ENCODE measurements at regions of chr6 and their contacts with region 1.

Region 1: DNA sequence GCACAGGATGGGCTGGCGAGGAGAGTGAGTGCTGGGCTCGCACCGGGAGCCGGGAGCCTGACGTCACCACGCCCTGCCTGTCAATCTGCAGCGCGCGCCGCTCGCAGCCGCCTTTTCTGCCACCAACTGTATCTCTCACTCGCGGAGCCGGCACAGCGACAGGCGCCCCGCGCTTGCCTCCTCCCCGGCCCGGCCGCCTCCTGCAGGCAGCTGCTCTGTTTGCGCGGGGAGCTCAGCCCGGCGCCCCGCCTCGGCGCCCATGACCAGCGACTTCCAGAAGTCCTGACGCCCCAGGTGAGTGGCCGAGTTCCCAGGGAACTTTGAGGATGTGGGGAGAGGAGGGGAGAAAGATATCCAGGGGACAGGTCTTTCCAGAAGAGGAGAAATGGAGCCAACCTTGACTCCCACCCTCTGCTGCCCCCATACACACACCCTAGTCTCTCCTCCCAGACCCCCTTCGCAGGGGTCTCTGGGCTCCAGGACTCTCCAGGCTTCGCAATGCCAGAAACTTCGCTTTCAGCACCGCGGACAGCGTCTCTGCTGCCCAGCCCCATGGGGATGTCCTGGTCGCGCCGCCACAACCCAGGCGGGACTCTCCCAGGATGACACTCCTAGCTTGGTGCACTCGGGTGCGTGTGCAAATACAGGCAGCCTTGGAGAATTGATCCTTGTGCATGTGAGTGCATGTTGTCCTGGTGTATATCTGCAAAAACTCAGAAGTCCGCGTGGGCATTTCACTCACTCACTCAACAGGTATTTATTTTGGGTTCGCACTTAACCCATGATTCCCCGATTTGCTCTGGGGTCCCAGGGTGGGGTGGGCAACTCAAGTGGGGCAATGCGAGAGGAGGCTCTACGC is at the start of gene GPR6:
- DNase-seq: peak; percentile 45
- H3K27ac ChIP-seq: no peak within 1 kb of the TSS
- CTCF ChIP-seq: no peak

Region 2: GRCh38 chr6:110053395-110054240 is 75.2 kb after region 1 on chr6:
- CTCF ChIA-PET with region 1: interaction called, 11 read pairs
- POLR2A ChIA-PET with region 1: no interaction called
- DNase-seq: peak; percentile 59
- H3K27ac ChIP-seq: no peak overlapping the region
- CTCF ChIP-seq: peak; percentile 78

Measured in RWPE1 (cell line).